ENCODE measurements at regions of chr12 and their contacts with region 1.

Region 1: DNA sequence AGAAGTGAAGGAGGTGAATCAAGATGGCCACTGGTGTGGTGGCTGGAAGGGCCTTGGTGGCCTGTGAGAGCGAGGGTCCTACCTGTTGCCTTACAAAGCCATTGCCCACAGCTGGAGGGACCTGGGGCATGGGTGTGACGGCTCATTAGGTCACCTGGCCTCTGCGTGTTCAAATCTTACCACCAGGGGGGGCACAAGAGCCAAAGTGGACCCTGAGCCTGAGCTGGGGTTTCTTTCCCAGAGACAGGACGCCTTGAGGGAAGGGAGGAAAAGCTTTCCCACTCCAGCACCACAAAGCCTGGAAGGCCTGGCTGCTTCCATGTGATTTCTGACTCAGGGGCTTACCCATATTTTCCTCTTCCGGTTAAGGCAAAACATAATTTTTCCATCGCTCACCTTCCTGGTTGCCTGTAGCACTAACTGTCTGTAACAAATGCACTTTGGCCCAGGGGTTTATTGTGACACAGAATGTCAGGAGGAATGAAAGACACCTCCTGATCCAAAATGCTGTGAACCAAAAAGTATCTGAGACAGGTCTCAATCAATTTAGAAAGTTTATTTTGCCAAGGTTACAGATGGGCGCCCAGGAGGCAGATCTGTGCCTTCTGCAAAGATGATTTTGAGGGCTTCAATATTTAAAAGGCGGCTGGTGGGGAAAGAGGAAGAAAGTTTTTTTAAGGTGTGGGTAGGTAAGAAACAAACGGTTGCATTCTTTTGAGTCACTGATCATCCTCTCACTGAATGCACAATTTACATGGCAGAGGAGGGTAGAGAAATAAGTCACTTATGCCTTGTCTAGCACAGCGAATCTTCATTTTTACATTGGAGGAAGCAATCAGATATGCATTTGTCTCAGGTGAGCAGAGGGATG is 4.3 kb upstream of the CD9 start:
- DNase-seq: peak; percentile 93 to 98
- H3K4me3 ChIP-seq: no peak overlapping the region
- H3K4me3 Mint-ChIP-seq: no peak overlapping the region
- H3K27ac Mint-ChIP-seq: peak overlapping the region; percentile 55
- H3K4me1 ChIP-seq: peaks cover 63% of the 10 kb centered on the region
- H3K4me1 Mint-ChIP-seq: peaks cover 53% of the 10 kb centered on the region
- H3K27me3 ChIP-seq: no peaks in the 10 kb centered on the region
- H3K27me3 Mint-ChIP-seq: no peaks in the 10 kb centered on the region
- CTCF ChIP-seq: peak; percentile 96 to 97

Region 2: DNA sequence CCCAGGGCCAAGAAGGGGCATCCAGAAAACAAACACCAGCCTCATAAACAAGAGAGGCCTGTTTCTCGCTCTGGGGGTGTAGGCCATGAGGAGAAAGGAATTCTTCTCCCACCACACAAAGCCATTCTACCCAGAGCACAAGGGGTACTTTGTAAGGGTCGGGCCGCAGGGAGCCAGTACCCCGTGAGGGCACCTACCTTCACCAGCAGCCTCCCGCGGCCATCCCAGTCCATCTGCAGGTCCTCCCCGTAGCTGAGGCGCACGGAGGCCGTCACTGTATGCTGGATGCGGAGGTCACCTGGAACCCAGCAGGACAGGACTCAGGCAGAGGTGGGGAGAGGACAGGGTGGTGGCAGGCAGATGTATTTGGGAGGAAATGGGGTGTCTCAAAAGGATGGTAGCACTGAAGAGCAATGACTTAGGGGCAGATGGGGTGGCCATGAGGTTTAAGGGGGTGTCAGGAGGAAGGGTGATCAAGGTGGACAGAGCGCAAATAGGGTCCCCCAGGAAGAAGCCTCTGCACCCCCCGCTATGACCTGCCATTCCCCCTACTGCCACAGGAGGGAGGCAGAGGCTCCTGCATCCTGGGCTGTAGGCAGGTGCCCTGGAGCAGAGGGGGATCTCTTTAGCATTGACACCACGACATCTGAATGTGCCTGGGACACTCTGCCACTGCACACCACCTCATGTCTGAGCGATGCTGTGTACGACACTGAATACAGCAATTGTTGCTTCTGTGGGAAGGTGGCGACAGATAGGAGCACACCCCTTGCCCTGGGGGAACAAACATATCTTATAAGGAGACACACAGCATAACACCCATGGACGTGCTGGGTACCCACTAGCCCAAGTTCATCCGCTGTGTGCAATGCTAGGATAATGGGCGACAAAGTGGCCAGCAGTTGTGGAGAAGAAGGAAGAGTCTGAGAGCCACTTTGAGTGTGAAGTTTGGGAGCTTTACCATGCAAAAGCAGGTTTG is 132.9 kb before region 1 on chr12:
- CTCF ChIA-PET with region 1: interaction called, 17 read pairs
- POLR2A ChIA-PET with region 1: no interaction called
- intact Hi-C with region 1: loop called (anchors 1 kb)
- DNase-seq: peak; percentile 79 to 85
- H3K4me3 ChIP-seq: no peak overlapping the region
- H3K4me3 Mint-ChIP-seq: no peak overlapping the region
- H3K27ac Mint-ChIP-seq: no peak overlapping the region
- H3K4me1 ChIP-seq: peaks cover 16% of the 10 kb centered on the region
- H3K4me1 Mint-ChIP-seq: peaks cover 39% of the 10 kb centered on the region
- H3K27me3 ChIP-seq: no peaks in the 10 kb centered on the region
- H3K27me3 Mint-ChIP-seq: no peaks in the 10 kb centered on the region
- CTCF ChIP-seq: peak; percentile 99 to 100

Region 3: DNA sequence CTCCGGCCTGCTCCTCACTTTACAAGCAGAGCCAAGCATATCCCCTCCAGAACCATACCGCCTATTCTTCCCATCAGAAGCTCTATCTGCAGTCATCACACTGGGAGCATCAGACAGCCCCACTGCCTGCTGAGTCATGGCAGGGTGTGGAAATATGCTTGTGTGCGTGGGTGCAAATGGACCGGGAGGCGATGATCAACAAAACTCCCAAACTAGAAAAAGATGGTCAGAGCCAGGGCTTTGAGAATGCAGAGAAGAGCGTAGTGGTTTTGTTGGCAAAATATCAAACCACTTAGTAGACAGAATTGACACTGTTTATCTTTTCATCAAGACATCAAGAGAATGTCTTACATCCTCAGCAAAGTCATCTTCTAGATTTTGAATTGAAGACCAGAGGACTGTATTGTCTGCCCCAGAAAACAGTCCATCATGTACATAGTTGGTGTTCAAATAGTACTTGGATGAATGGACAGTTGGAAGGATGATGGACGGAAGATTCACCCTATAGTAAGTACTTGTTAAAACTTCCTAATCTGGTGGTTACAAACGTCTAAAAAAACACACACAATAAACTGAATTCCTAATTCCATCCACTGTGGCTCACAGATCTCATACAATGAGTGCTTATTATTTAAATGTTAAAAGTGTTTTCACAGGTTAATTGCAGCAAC is 126.3 kb before region 1 on chr12:
- CTCF ChIA-PET with region 1: interaction called, 25 read pairs
- POLR2A ChIA-PET with region 1: no interaction called
- intact Hi-C with region 1: loop called (anchors 1 kb)
- DNase-seq: no peak
- H3K4me3 ChIP-seq: no peak overlapping the region
- H3K4me3 Mint-ChIP-seq: no peak overlapping the region
- H3K27ac Mint-ChIP-seq: no peak overlapping the region
- H3K4me1 ChIP-seq: peaks cover 41% of the 10 kb centered on the region
- H3K4me1 Mint-ChIP-seq: peaks cover 59% of the 10 kb centered on the region
- H3K27me3 ChIP-seq: no peaks in the 10 kb centered on the region
- H3K27me3 Mint-ChIP-seq: no peaks in the 10 kb centered on the region
- CTCF ChIP-seq: no peak

Region 4: GRCh38 chr12:6099316-6099715 is 96.6 kb before region 1 on chr12:
- CTCF ChIA-PET with region 1: no interaction called
- POLR2A ChIA-PET with region 1: no interaction called
- intact Hi-C with region 1: no loop called
- DNase-seq: no peak
- H3K4me3 ChIP-seq: no peak overlapping the region
- H3K4me3 Mint-ChIP-seq: no peak overlapping the region
- H3K27ac Mint-ChIP-seq: no peak overlapping the region
- H3K4me1 ChIP-seq: no peaks in the 10 kb centered on the region
- H3K4me1 Mint-ChIP-seq: no peaks in the 10 kb centered on the region
- H3K27me3 ChIP-seq: no peaks in the 10 kb centered on the region
- H3K27me3 Mint-ChIP-seq: no peaks in the 10 kb centered on the region
- CTCF ChIP-seq: no peak

Region 5: GRCh38 chr12:6116175-6117021 is 79.5 kb before region 1 on chr12:
- CTCF ChIA-PET with region 1: no interaction called
- POLR2A ChIA-PET with region 1: no interaction called
- intact Hi-C with region 1: no loop called
- DNase-seq: no peak
- H3K4me3 ChIP-seq: no peak overlapping the region
- H3K4me3 Mint-ChIP-seq: no peak overlapping the region
- H3K27ac Mint-ChIP-seq: peak overlapping the region; percentile 33
- H3K4me1 ChIP-seq: no peaks in the 10 kb centered on the region; the same call in 1 of the 2 replicates
- H3K4me1 Mint-ChIP-seq: no peaks in the 10 kb centered on the region
- H3K27me3 ChIP-seq: no peaks in the 10 kb centered on the region
- H3K27me3 Mint-ChIP-seq: no peaks in the 10 kb centered on the region
- CTCF ChIP-seq: no peak

Region 6: GRCh38 chr12:6272300-6273204 is 76.7 kb after region 1 on chr12:
- CTCF ChIA-PET with region 1: interaction called, 111 read pairs
- POLR2A ChIA-PET with region 1: interaction called, 6 read pairs
- intact Hi-C with region 1: no loop called
- DNase-seq: no peak
- H3K4me3 ChIP-seq: no peak overlapping the region
- H3K4me3 Mint-ChIP-seq: no peak overlapping the region
- H3K27ac Mint-ChIP-seq: peak overlapping the region; percentile 80
- H3K4me1 ChIP-seq: peaks cover 10% of the 10 kb centered on the region
- H3K4me1 Mint-ChIP-seq: peaks cover 32% of the 10 kb centered on the region
- H3K27me3 ChIP-seq: no peaks in the 10 kb centered on the region
- H3K27me3 Mint-ChIP-seq: no peaks in the 10 kb centered on the region
- CTCF ChIP-seq: no peak

Region 7: GRCh38 chr12:6278439-6279255 is 82.7 kb after region 1 on chr12:
- CTCF ChIA-PET with region 1: interaction called, 111 read pairs
- POLR2A ChIA-PET with region 1: interaction called, 11 read pairs
- intact Hi-C with region 1: loop called (anchors 1 kb)
- DNase-seq: peak; percentile 89 to 97
- H3K4me3 ChIP-seq: peak overlapping the region; percentile 52
- H3K4me3 Mint-ChIP-seq: peak overlapping the region; percentile 80
- H3K27ac Mint-ChIP-seq: peak overlapping the region; percentile 93
- H3K4me1 ChIP-seq: peaks cover 23% of the 10 kb centered on the region
- H3K4me1 Mint-ChIP-seq: peaks cover 42% of the 10 kb centered on the region
- H3K27me3 ChIP-seq: no peaks in the 10 kb centered on the region
- H3K27me3 Mint-ChIP-seq: no peaks in the 10 kb centered on the region
- CTCF ChIP-seq: peak; percentile 34 to 99

Region 8: DNA sequence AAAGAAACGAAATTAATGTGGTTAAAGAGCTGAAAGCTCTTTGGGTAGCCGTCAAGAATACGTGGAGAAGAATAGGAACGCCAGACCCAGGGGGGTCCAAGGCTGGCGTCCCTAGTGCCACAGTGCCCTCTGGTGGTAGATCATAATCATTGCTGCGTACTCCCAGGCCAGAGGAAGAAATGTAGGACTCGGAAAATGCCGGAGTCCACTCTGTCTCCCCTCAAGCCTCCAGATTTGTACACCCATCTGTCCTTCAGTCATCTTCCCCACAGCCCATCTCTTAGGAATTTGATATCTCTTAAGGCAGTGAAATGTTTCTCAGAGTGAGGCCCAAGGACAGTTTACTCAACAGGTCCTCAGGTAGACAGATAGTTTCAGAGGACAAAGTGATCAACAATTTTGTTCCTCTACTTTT is 89.2 kb after region 1 on chr12:
- CTCF ChIA-PET with region 1: interaction called, 111 read pairs
- POLR2A ChIA-PET with region 1: interaction called, 6 read pairs
- intact Hi-C with region 1: loop called (anchors 1 kb)
- DNase-seq: peak; percentile 76 to 87
- H3K4me3 ChIP-seq: no peak overlapping the region
- H3K4me3 Mint-ChIP-seq: no peak overlapping the region
- H3K27ac Mint-ChIP-seq: no peak overlapping the region
- H3K4me1 ChIP-seq: peaks cover 10% of the 10 kb centered on the region
- H3K4me1 Mint-ChIP-seq: peaks cover 11% of the 10 kb centered on the region
- H3K27me3 ChIP-seq: no peaks in the 10 kb centered on the region
- H3K27me3 Mint-ChIP-seq: no peaks in the 10 kb centered on the region
- CTCF ChIP-seq: peak; percentile 94 to 99

Region 9: GRCh38 chr12:6563448-6564050 is 367.6 kb after region 1 on chr12:
- CTCF ChIA-PET with region 1: no interaction called
- POLR2A ChIA-PET with region 1: no interaction called
- intact Hi-C with region 1: no loop called
- DNase-seq: peak; percentile 63 to 80
- H3K4me3 ChIP-seq: no peak overlapping the region
- H3K4me3 Mint-ChIP-seq: no peak overlapping the region
- H3K27ac Mint-ChIP-seq: no peak overlapping the region
- H3K4me1 ChIP-seq: no peaks in the 10 kb centered on the region
- H3K4me1 Mint-ChIP-seq: peaks cover 9% of the 10 kb centered on the region
- H3K27me3 ChIP-seq: no peaks in the 10 kb centered on the region
- H3K27me3 Mint-ChIP-seq: no peaks in the 10 kb centered on the region
- CTCF ChIP-seq: peak; percentile 89 to 96